ENCODE measurements at regions of chr9 and their contacts with region 1.

Region 1: DNA sequence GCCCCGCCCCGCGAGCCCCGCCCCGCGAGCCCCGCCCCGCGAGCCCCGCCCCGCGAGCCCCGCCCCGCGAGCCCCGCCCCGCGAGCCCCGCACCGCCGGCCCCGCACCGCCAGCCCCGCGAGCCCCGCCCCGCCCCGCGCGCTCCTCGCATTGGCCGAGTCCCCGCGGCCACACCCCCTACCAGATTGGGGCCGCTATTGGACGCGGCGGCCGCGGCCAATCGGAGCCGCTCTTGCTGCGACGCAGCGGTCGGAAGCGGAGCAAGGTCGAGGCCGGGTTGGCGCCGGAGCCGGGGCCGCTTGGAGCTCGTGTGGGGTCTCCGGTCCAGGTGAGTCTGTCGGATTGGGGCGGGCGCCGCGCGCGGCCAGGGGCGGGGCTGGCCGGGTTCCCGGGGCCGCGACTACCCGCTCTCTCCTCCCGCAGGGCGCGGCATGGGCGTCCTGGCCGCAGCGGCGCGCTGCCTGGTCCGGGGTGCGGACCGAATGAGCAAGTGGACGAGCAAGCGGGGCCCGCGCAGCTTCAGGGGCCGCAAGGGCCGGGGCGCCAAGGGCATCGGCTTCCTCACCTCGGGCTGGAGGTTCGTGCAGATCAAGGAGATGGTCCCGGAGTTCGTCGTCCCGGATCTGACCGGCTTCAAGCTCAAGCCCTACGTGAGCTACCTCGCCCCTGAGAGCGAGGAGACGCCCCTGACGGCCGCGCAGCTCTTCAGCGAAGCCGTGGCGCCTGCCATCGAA is at the start of gene MRPL41:
- DNase-seq: peak; percentile 90
- H3K4me3 Mint-ChIP-seq: peak within 1 kb of the TSS; percentile 90
- H3K27ac Mint-ChIP-seq: peak within 1 kb of the TSS; percentile 69
- H3K4me1 Mint-ChIP-seq: peaks cover 8% of the 10 kb centered on the region
- H3K27me3 Mint-ChIP-seq: no peaks in the 10 kb centered on the region
- total RNA-seq, gene MRPL41: 43.2 and 49.4 TPM in 2 replicates

Region 2: GRCh38 chr9:137459147-137459600 is 92.6 kb before region 1 on chr9 and contains the start of gene NSMF:
- intact Hi-C with region 1: loop called (anchors 2 kb)
- DNase-seq: peak; percentile 93
- H3K4me3 Mint-ChIP-seq: peak within 1 kb of the TSS; percentile 13
- H3K27ac Mint-ChIP-seq: peak within 1 kb of the TSS; percentile 65
- H3K4me1 Mint-ChIP-seq: peaks cover 11% of the 10 kb centered on the region
- H3K27me3 Mint-ChIP-seq: no peaks in the 10 kb centered on the region
- total RNA-seq, gene NSMF: 56.1 and 57.6 TPM in 2 replicates

Region 3: GRCh38 chr9:137816531-137817235 is 264.9 kb after region 1 on chr9:
- intact Hi-C with region 1: no loop called
- DNase-seq: no peak
- H3K4me3 Mint-ChIP-seq: no peak overlapping the region
- H3K27ac Mint-ChIP-seq: no peak overlapping the region
- H3K4me1 Mint-ChIP-seq: no peaks in the 10 kb centered on the region
- H3K27me3 Mint-ChIP-seq: no peaks in the 10 kb centered on the region

Measured in activated T-helper 2 cell treated with anti-CD3 and anti-CD28 coated beads, Interferon-gamma antibody, Interleukin-2, Interleukin-4, amounts not matched to agents 10 μg/mL and 5 μg/mL and 100 μg/mL, durations not matched to agents 14 hours and 24 hours and 36 hours (primary cell).